Ascending aorta (tissue), 2 donors: ENCODE measurements at regions of chr10 and their contacts with region 1.

Region 1: GRCh38 chr10:42753126-42753506 is 29.5 kb upstream of the BMS1 start:
- DNase-seq: peak in 1 of 2 donors; percentile 85
- H3K4me3 ChIP-seq: peak overlapping the region; percentile 61 to 81
- H3K27ac ChIP-seq: peak overlapping the region in 1 of 2 donors; percentile 12
- H3K4me1 ChIP-seq: peaks cover 0 to 11% of the 10 kb centered on the region in 2 donors
- H3K27me3 ChIP-seq: no peaks in the 10 kb centered on the region
- CTCF ChIP-seq: peak; percentile 80 to 93 (median 93)

Region 2: GRCh38 chr10:42552493-42553407 is 200.4 kb before region 1 on chr10:
- intact Hi-C with region 1: loop called (anchors 5 kb)
- DNase-seq: peak; percentile 85 to 98
- H3K4me3 ChIP-seq: peak overlapping the region; percentile 68 to 87
- H3K27ac ChIP-seq: peak overlapping the region; percentile 29 to 57
- H3K4me1 ChIP-seq: peaks cover 3 to 6% of the 10 kb centered on the region in 2 donors
- H3K27me3 ChIP-seq: no peaks in the 10 kb centered on the region
- CTCF ChIP-seq: no peak

Region 3: DNA sequence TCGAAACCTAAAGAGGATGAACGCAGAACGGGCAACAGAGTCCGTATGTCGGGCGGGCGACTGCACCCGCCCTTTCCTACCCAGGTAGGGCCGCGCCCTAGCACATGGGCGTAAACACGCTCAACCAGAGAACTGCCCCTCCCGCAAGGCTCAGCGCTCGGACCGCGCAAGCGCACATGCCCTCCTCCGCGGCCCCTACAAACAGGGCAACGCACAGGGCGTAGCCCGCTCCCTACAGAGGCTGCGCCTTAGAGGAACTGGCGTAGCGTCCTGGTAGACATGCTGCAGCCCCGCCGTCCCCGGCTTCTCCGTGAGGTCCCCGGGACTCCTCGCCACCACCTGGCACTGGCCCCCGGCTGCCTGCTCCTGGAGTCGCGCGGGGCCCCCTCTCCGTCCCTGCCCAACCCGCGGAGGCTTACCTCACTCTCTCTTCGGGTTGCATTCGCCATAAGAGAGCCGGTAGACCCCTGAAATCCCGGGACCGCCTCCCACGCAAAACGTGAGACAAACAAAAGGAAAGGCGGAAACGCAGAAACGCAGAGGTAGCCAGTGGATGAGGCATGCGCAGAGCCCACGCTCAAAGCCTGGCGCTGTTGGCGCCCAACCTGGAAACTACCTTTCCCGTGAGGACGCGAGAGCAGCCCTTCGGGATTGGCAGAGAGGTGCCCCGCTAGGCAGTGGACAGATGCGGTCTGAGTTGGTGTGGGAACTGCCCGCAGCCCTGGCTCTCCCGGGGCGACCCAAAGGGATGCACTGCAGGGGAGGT is 114.9 kb before region 1 on chr10 and contains the start of gene ZNF33B:
- intact Hi-C with region 1: loop called (anchors 10 kb)
- DNase-seq: peak; percentile 73 to 94
- H3K4me3 ChIP-seq: peak within 1 kb of the TSS; percentile 82 to 86
- H3K27ac ChIP-seq: peak within 1 kb of the TSS; percentile 90 to 91
- H3K4me1 ChIP-seq: no peaks in the 10 kb centered on the region
- H3K27me3 ChIP-seq: no peaks in the 10 kb centered on the region
- CTCF ChIP-seq: no peak
- total RNA-seq, gene ZNF33B: 8.6 TPM

Region 4: DNA sequence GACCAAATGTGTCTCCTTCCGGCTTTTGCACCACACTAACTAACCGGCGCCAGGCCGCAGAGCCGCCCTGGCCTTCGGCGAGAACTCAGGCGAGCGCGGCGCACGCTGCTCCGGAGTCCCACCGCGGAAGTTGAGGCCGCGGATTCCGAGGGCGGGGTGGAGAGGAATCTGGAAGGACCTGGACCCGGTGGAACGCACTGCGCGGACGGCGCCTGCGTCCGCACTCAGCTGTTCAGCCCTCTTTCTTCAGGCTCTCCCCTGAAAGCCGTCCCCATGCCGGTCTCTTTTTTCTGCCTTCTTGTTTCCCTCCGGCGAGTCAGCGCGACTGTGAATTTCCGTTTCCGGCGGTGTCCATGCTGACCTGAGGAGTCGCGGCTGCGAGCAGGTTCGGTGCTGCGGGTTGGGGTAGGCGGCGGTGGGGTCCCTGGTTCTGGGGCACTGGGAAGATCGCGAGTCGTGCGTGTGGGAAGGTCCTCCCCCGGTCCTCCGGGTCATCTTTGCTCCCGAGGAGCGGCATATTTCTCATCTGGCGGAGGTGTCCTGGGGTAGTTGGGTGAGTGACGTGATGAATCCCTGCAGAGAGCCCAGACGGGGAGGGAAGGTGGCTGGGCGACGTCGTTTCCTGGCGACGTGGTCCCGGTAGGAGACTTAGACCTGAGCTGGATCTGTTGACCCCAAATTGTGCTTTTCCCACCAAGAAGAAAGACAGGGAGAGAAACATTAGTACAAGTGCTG is 29.5 kb after region 1 on chr10 and contains the start of gene BMS1:
- intact Hi-C with region 1: loop called (anchors 1 kb)
- DNase-seq: peak; percentile 46 to 94
- H3K4me3 ChIP-seq: peak within 1 kb of the TSS; percentile 67 to 77
- H3K27ac ChIP-seq: peak within 1 kb of the TSS; percentile 87 to 94
- H3K4me1 ChIP-seq: peaks cover 0 to 14% of the 10 kb centered on the region in 2 donors
- H3K27me3 ChIP-seq: no peaks in the 10 kb centered on the region
- CTCF ChIP-seq: no peak
- total RNA-seq, gene BMS1: 6.2 TPM

Region 5: DNA sequence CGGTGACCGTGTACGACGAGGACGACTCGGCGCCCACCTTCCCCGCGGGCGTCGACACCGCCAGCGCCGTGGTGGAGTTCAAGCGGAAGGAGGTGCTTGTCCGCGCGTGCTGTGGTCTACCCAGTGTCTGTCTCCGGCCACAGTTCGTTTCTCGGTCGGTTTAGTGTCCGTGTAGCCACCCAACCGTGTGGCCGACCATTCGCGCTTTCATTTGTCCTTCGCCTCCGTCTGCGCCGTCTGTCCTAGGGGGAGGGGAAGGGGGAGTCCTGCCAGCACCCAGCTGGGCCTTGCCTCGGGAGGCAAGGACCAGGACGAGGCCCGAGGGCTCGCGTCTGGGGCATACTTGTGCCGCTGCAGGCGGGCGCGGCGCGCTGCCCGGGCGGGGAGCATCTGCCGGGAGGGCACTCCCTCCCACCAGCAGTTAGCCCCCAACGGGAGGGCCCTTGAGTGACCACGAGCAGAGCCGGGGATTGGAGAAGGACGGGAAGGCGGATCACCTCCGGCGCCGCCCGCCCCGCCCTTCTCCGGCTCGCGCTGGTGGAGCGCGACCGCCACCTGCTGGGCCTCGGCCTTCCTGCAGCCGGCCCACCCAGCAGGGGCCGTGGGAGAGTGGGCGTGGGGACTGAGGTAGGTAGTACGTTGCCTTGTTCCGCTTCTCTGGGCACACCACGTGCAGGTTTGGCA is 352.1 kb after region 1 on chr10:
- intact Hi-C with region 1: loop called (anchors 1 kb)
- DNase-seq: peak in 1 of 2 donors; percentile 84
- H3K4me3 ChIP-seq: peak overlapping the region; percentile 73 to 74
- H3K27ac ChIP-seq: no peak overlapping the region
- H3K4me1 ChIP-seq: peaks cover 0 to 3% of the 10 kb centered on the region in 2 donors
- H3K27me3 ChIP-seq: no peaks in the 10 kb centered on the region
- CTCF ChIP-seq: peak; percentile 96 to 99 (median 99)